ENCODE measurements at regions of chr17 and their contacts with region 1.

Region 1: DNA sequence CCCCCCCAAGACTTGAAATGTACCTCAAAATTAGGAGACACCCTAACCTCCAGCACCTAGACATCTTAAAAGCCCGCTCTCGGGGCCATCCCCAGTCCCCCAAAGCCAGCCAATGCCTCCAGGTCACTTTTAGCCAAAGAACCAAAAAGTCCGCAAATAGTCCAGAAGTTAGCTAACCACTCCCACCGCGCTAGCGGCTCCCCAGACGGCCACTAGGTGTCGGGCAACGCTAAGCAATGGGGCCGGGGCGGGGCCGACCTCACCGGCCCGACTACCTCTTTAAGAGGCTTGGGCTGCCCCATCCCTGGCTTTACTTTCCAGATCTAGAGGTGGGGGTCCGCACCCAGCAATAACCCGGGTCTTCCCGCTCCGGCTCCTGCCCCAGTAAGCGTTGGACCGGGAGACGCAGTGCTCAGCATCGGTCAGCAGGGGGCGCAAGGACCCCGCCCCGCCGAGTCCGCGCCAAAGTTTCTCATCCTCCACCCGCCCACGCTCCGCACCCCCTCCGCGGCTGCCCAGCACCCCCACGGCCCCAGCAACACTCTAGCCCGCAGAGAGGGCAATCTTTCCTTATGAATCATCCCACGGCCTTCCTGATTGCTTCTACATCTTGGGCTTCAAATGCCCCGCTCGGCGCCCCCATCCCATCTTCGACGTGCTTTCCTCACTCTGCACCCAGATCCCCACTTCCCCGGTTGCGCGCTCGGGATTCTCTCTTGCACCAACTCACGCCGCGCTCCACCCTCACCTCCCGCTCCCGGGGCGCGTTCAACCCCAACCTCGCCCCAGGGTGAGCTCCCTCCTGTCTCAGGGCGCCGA is 765 bp downstream of the COL1A1 start:
- DNase-seq: peak; percentile 87
- H3K4me3 Mint-ChIP-seq: peak overlapping the region; percentile 67
- H3K27ac Mint-ChIP-seq: no peak overlapping the region
- H3K4me1 Mint-ChIP-seq: peaks cover 20% of the 10 kb centered on the region
- H3K27me3 Mint-ChIP-seq: peaks cover 60% of the 10 kb centered on the region

Region 2: GRCh38 chr17:50161023-50161910 is 39.4 kb before region 1 on chr17:
- CTCF ChIA-PET with region 1: interaction called, 15 read pairs
- POLR2A ChIA-PET with region 1: no interaction called
- DNase-seq: peak; percentile 96
- H3K4me3 Mint-ChIP-seq: peak overlapping the region; percentile 70
- H3K27ac Mint-ChIP-seq: peak overlapping the region; percentile 75
- H3K4me1 Mint-ChIP-seq: peaks cover 36% of the 10 kb centered on the region
- H3K27me3 Mint-ChIP-seq: peaks cover 7% of the 10 kb centered on the region

Region 3: DNA sequence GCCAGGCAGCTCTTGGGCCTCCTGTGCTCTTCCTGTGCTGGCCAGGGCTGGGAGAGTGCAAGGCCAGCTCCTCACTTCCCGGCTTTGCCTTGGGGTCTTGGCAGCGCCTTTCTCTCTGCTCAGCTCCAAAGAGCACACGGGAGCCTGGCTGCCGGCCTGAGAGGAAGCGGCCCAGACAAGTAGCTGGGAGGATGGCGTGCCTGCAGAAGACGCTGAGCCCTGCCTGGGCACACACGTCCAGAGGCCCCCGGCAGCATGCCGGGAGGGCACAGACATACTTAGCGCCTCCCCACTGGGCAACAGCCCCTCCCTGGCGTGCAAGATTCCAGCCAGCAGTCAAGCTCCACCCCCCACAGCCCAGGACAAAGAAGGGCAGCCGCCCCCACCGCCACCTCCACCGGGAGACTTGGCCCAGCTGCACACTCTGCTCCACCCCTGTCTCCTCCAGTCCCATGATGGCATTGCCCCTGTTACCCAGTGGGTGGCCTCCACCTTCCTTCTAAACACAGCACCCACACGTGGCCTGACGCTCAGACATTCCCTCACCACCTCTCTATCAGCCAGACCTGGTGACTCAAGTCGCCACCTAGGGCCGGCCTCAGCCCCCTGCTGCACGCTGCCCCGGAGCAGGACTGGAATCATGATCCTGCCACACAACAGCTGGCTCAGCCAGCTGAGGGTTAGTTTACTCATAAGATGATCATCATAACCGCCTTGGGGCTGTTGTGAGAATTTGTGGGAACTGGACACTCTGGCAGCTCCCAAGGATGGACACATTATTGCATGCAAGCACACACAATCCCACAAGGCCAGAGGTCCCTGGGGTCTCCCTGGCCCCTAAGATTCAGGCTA is 22.5 kb before region 1 on chr17:
- CTCF ChIA-PET with region 1: interaction called, 12 read pairs
- POLR2A ChIA-PET with region 1: no interaction called
- DNase-seq: peak; percentile 52
- H3K4me3 Mint-ChIP-seq: no peak overlapping the region
- H3K27ac Mint-ChIP-seq: no peak overlapping the region
- H3K4me1 Mint-ChIP-seq: peaks cover 18% of the 10 kb centered on the region
- H3K27me3 Mint-ChIP-seq: peaks cover 16% of the 10 kb centered on the region

Region 4: DNA sequence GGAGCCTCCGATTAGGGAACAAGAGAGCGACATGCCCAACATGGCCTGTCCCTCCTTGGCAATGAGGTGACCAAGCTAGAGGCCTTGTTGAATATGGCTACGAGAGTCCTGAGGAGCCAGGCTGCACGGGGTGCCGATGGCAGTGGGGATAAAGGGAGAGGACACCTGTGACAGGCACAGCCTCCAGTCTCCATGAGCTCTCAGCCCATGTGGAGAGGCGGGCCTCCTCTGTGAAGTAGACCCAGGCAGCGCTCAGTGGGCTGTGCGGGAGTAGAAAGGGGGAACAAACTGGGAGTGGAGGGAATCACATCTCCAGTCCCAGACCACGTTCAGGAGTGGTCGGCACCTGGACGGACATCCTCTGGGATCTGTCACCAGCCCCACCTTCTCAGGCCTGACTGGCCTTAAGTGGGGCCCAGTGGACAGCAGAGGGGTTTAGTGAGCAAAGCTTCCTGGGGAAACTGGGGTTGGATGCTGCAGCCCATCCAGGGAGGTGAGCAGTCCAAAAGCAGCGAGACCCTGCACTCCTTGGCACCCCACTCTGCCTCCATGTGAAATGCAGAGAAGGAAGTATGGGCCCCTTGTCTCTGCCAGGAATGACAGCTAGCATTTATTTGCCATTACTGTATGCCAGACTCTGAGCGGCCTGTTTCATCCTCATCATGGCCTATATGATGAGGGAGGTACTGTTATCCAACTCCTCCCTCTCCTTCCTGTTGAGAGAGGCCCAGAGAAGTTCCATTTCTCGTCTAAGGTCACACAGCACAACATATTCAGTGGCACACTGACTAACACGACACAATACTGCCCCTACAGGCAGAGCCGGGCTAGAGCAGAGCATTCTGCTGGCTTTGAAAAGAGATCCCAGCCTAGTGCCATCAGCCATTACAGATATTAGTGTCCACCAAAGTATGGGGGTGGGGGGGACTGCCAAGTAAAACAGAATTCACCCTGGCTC is 69.1 kb after region 1 on chr17:
- CTCF ChIA-PET with region 1: interaction called, 56 read pairs
- POLR2A ChIA-PET with region 1: interaction called, 7 read pairs
- DNase-seq: peak; percentile 76
- H3K4me3 Mint-ChIP-seq: no peak overlapping the region
- H3K27ac Mint-ChIP-seq: no peak overlapping the region
- H3K4me1 Mint-ChIP-seq: peaks cover 18% of the 10 kb centered on the region
- H3K27me3 Mint-ChIP-seq: peaks cover 9% of the 10 kb centered on the region

Region 5: GRCh38 chr17:50297407-50297865 is 96.8 kb after region 1 on chr17:
- CTCF ChIA-PET with region 1: interaction called, 130 read pairs
- POLR2A ChIA-PET with region 1: interaction called, 3 read pairs
- DNase-seq: peak; percentile 82
- H3K4me3 Mint-ChIP-seq: no peak overlapping the region
- H3K27ac Mint-ChIP-seq: no peak overlapping the region
- H3K4me1 Mint-ChIP-seq: peaks cover 13% of the 10 kb centered on the region
- H3K27me3 Mint-ChIP-seq: peaks cover 2% of the 10 kb centered on the region